Ascending aorta (tissue), 2 donors: ENCODE measurements at regions of chr5 and their contacts with region 1.

Region 1: DNA sequence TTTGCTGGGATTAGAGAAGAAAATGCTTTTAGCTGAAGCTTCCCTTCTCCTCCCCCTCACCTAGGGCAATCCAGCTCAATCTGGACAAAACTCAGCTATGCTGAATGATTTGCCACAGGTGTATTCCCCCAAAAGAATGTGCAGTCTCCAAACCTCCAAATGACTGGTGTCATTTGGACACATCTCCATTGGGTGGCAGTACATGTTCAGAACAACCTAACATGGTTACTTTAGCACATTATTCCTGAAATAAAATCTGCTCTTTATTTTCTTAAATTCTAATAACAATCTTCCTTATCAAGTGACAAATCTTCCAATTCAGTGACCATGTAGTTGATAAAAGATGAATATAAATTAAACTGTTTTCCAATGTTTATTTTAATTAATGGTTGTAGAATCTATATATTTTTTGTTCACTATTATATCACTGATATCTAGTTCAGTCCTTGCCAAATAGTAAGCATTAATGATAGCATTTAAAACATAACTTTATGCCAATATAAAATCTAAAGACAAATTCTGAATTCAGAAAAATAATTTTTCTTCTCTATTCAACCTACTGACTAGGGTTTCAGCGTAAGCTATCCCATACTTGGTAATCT is 61.3 kb upstream of the MOCS2 start:
- DNase-seq: no peak
- H3K4me3 ChIP-seq: no peak overlapping the region
- H3K27ac ChIP-seq: no peak overlapping the region
- H3K4me1 ChIP-seq: no peaks in the 10 kb centered on the region
- H3K27me3 ChIP-seq: no peaks in the 10 kb centered on the region
- CTCF ChIP-seq: peak; percentile 50 to 70 (median 56)

Region 2: DNA sequence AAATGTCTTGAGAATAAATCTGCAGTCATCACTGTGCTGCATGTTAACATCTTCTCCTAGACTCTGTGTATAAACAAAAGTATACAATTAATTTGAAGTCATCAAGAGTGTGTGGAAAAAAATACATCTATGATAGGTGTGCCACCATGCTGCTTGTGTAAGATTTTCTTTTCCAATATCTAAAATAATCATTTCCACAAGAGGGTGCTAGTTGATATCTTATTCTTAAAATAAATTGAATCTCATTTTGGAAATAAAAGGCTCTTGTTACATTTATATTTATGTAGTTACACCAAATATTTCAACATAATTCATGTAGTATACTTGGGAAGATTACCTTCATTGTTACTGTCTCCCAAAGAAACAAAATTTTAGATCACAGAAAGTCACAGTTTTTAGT is 47.1 kb before region 1 on chr5:
- intact Hi-C with region 1: no loop called
- DNase-seq: no peak
- H3K4me3 ChIP-seq: no peak overlapping the region
- H3K27ac ChIP-seq: no peak overlapping the region
- H3K4me1 ChIP-seq: no peaks in the 10 kb centered on the region
- H3K27me3 ChIP-seq: no peaks in the 10 kb centered on the region
- CTCF ChIP-seq: peak in 1 of 3 experiments; percentile 15

Region 3: GRCh38 chr5:53430261-53431252 is 259.7 kb after region 1 on chr5:
- intact Hi-C with region 1: loop called (anchors 1 kb)
- DNase-seq: no peak
- H3K4me3 ChIP-seq: no peak overlapping the region
- H3K27ac ChIP-seq: no peak overlapping the region
- H3K4me1 ChIP-seq: no peaks in the 10 kb centered on the region
- H3K27me3 ChIP-seq: no peaks in the 10 kb centered on the region
- CTCF ChIP-seq: peak; percentile 42 to 62 (median 45)

Region 4: GRCh38 chr5:54217826-54218503 is 1047.1 kb after region 1 on chr5:
- intact Hi-C with region 1: loop called (anchors 5 kb)
- DNase-seq: peak in 1 of 2 donors; percentile 66
- H3K4me3 ChIP-seq: no peak overlapping the region
- H3K27ac ChIP-seq: no peak overlapping the region
- H3K4me1 ChIP-seq: no peaks in the 10 kb centered on the region
- H3K27me3 ChIP-seq: no peaks in the 10 kb centered on the region
- CTCF ChIP-seq: peak; percentile 52 to 78 (median 68)